ENCODE measurements at regions of chr2 and their contacts with region 1.

Region 1: GRCh38 chr2:132645722-132646535 is 24.1 kb downstream of the LYPD1 start:
- DNase-seq: peak; percentile 94
- H3K4me3 ChIP-seq: peak overlapping the region; percentile 58
- H3K27ac ChIP-seq: peak overlapping the region; percentile 85
- H3K4me1 ChIP-seq: peaks cover 81% of the 10 kb centered on the region
- CTCF ChIP-seq: no peak

Region 2: GRCh38 chr2:131093006-131093695 is 1552.8 kb before region 1 on chr2 and contains the start of gene FAM168B:
- CTCF ChIA-PET with region 1: no interaction called
- POLR2A ChIA-PET with region 1: no interaction called
- intact Hi-C with region 1: loop called (anchors 10 kb)
- DNase-seq: peak; percentile 92
- H3K4me3 ChIP-seq: peak within 1 kb of the TSS; percentile 97
- H3K27ac ChIP-seq: peak within 1 kb of the TSS; percentile 63
- H3K4me1 ChIP-seq: peaks cover 7% of the 10 kb centered on the region
- CTCF ChIP-seq: no peak
- total RNA-seq, gene FAM168B: 53.5 and 53.6 TPM in 2 replicates

Region 3: DNA sequence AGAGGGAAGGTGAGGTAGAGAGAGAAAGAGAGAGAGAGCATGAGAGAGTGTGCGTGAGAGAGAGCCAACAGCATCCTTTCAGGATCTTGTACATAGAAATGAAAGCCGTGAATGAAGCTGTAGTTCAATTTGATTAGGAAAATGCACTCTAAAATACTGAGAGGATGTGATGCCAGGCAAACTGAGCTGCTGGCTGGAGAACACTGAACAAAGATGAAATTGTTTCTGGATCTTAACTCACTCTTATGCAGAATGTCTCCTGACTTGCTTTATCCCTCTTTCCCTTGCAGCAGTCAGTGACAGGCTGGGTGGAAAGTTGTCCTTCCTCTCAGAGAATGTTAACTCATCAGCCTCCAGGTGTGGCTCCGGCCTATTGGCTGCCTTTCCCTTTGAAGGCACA is 13.4 kb after region 1 on chr2:
- CTCF ChIA-PET with region 1: interaction called, 3 read pairs
- POLR2A ChIA-PET with region 1: interaction called, 22 read pairs
- intact Hi-C with region 1: no loop called
- DNase-seq: no peak
- H3K4me3 ChIP-seq: no peak overlapping the region
- H3K27ac ChIP-seq: no peak overlapping the region
- H3K4me1 ChIP-seq: no peaks in the 10 kb centered on the region
- CTCF ChIP-seq: no peak